ENCODE measurements at regions of chr17 and their contacts with region 1.

Region 1: DNA sequence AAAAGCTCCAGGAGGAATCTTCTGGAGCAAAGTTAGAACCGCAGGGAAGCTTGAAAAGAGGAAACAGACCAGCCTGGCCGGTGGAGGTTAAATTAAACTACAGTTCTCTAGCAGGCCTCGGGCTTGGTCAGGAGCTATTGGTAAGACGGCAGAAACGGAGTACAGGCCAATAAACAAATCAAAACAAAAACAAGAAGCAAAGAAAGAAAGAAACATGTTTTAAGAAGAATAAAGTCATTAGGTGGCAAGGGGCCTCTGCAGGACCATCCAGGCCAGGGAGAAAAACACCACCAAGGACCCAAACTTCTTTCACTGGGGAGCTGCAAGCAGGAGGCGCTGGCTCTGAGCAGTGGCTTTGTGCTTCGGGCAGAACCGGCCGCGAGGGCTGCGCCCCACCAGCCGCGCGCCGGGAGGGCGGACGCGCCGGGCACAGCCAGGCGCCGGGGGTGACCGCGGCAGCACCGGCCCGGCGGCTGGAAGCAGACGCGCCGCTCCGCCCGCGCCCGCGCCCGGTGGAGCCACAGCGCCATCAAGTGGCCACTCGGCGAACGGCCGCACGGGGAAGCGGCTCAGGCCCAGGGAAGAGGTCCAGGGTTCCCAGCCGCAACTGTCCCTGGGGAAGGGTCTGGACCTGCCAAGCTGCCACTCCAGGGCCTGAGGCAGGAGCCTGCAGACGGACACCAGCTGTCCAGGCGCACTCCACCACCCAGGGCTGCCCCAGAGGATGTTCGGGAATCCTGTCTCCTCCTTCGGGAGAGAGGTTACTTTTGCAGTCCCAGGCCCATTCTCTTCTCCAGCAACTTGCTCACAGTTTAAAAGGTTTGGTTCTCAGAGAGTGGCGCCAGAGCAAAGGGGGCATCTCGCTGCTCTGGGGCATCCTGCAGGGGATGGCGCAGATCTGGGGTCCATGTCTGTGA is 419.4 kb downstream of the SOX9 start:
- DNase-seq: peak; percentile 92
- H3K4me3 ChIP-seq: peak overlapping the region; percentile 59
- H3K27ac ChIP-seq: peak overlapping the region; percentile 36
- H3K4me1 ChIP-seq: peaks cover 4% of the 10 kb centered on the region; the same call in 1 of the 2 replicates
- H3K27me3 ChIP-seq: no peaks in the 10 kb centered on the region

Region 2: GRCh38 chr17:70767102-70767701 is 1773.0 kb before region 1 on chr17:
- in situ Hi-C with region 1: loop called (anchors 25 kb)
- DNase-seq: peak; percentile 61
- H3K4me3 ChIP-seq: no peak overlapping the region
- H3K27ac ChIP-seq: no peak overlapping the region
- H3K4me1 ChIP-seq: no peaks in the 10 kb centered on the region
- H3K27me3 ChIP-seq: no peaks in the 10 kb centered on the region

Region 3: GRCh38 chr17:71237903-71238538 is 1302.2 kb before region 1 on chr17:
- in situ Hi-C with region 1: loop called (anchors 25 kb)
- DNase-seq: peak; percentile 81
- H3K4me3 ChIP-seq: no peak overlapping the region
- H3K27ac ChIP-seq: no peak overlapping the region
- H3K4me1 ChIP-seq: peaks cover 7% of the 10 kb centered on the region; the same call in 1 of the 2 replicates
- H3K27me3 ChIP-seq: no peaks in the 10 kb centered on the region

Region 4: DNA sequence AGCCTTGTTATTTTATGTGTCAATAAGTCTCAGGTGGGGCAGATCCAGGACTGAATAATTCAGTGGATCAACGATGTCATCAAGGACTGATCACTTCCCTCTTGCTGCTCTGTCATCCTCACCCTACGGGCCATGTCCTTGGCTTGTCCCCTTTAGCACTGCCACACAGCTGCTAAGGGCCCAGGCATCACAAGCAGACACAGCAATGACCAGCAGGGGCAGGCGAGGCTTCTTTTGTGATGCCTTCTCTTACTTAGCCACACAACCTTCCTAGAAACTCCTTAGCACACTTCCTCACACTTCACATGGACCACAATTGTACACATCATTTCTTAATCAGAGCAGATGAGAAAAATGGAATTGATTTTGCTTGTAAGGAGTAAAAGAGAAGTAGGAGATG is 775.7 kb before region 1 on chr17:
- in situ Hi-C with region 1: loop called (anchors 25 kb)
- DNase-seq: peak; percentile 6
- H3K4me3 ChIP-seq: no peak overlapping the region
- H3K27ac ChIP-seq: no peak overlapping the region
- H3K4me1 ChIP-seq: peaks cover 8% of the 10 kb centered on the region; the same call in 1 of the 2 replicates
- H3K27me3 ChIP-seq: no peaks in the 10 kb centered on the region

Region 5: DNA sequence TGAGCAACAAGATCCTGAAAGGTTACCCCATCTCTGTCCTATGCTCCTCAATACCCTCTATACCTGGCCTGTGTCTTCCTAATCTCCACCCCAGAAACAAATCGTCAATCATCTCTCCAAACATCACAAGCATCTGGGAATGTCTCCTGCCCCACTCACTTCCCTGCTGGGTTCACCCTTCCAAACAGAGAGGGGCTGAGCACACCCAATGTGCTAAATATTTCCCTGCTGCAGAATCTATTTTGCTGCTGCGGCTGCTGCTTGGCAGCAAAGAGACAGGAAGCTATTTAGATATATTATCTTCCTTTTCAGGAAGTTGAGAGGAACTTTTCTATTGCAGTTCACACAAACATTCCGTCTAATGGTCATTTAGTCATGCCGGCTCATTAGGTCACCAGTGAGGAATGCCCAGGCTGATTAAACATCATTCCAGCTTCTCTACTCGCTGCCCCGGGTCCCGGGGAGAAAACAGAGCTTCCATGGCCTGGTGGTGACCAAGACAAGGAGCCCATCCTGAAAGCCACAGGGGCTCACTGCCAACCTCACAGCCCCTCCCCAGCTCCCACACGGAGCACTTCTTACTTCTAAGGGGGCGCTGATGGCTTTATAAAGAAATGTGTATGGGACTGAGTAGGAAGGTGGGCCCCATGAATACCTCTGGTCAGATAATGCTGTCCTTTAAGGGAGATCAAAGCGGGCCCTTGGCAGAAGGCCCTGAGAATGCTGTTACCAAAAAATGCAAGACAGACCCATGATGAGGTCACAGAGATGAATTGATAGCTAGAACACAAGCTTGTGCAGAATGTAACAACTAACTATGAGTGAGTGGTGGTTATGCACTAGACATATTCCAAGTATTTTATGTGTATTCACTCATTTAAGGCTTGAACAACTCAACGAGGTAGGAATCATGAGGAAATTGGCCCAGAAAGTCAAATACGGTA is 201.1 kb before region 1 on chr17:
- in situ Hi-C with region 1: loop called (anchors 10 kb)
- DNase-seq: peak; percentile 95
- H3K4me3 ChIP-seq: peak overlapping the region; percentile 38
- H3K27ac ChIP-seq: peak overlapping the region; percentile 89
- H3K4me1 ChIP-seq: peaks cover 46% of the 10 kb centered on the region
- H3K27me3 ChIP-seq: no peaks in the 10 kb centered on the region